Aorta (tissue), 5 donors: ENCODE measurements at regions of chr4 and their contacts with region 1.

Region 1: GRCh38 chr4:137531986-137532868 is at the start of gene PCDH18:
- DNase-seq: peak; percentile 94
- ATAC-seq: peak; percentile 93
- H3K4me3 ChIP-seq: peak within 1 kb of the TSS; percentile 73 to 88
- H3K27ac ChIP-seq: peak within 1 kb of the TSS in 1 of 2 donors; percentile 91
- H3K4me1 ChIP-seq: peaks cover 2 to 11% of the 10 kb centered on the region in 2 donors
- H3K27me3 ChIP-seq: no peaks in the 10 kb centered on the region
- total RNA-seq, gene PCDH18: 17.2 to 36.9 TPM

Region 2: GRCh38 chr4:137124278-137124932 is 407.8 kb before region 1 on chr4:
- intact Hi-C with region 1: loop called (anchors 5 to 10 kb)
- DNase-seq: no peak
- ATAC-seq: peak; percentile 89
- H3K4me3 ChIP-seq: peak overlapping the region; percentile 72 to 97
- H3K27ac ChIP-seq: no peak overlapping the region
- H3K4me1 ChIP-seq: no peaks in the 10 kb centered on the region
- H3K27me3 ChIP-seq: no peaks in the 10 kb centered on the region

Region 3: DNA sequence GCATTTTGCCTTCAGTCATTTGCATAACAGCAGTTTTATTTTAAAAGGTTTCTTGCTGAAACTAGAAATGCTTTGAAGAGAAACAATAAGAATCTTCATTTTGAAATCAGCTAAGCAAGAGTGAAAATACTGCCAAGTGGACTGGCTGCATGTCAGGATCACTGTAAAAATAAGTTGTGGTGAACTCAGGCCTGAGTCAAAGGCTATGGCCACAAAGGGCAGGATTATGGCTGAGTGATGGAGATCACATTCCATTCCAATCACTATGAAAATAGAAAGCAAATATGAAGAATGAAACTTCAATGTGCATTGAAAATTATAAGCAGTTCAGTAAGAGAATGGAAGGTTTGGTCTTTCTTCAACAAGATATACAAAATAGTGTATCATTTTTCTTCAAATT is 224.4 kb before region 1 on chr4:
- intact Hi-C with region 1: loop called in 1 of 2 experiments (anchors 2 kb)
- DNase-seq: peak in 1 of 2 donors; percentile 47
- ATAC-seq: no peak
- H3K4me3 ChIP-seq: no peak overlapping the region
- H3K27ac ChIP-seq: no peak overlapping the region
- H3K4me1 ChIP-seq: no peaks in the 10 kb centered on the region
- H3K27me3 ChIP-seq: no peaks in the 10 kb centered on the region

Region 4: GRCh38 chr4:137378821-137379220 is 153.4 kb before region 1 on chr4:
- intact Hi-C with region 1: loop called (anchors 5 kb)
- DNase-seq: no peak
- ATAC-seq: no peak
- H3K4me3 ChIP-seq: no peak overlapping the region
- H3K27ac ChIP-seq: no peak overlapping the region
- H3K4me1 ChIP-seq: peaks cover 3 to 4% of the 10 kb centered on the region in 2 donors
- H3K27me3 ChIP-seq: no peaks in the 10 kb centered on the region

Region 5: GRCh38 chr4:137432446-137433311 is 99.5 kb before region 1 on chr4:
- intact Hi-C with region 1: loop called (anchors 5 kb)
- DNase-seq: no peak
- ATAC-seq: no peak
- H3K4me3 ChIP-seq: peak overlapping the region; percentile 9 to 54
- H3K27ac ChIP-seq: peak overlapping the region in 1 of 2 donors; percentile 77
- H3K4me1 ChIP-seq: peaks cover 0 to 3% of the 10 kb centered on the region in 2 donors
- H3K27me3 ChIP-seq: no peaks in the 10 kb centered on the region

Region 6: GRCh38 chr4:137647375-137647774 is 115.1 kb after region 1 on chr4:
- intact Hi-C with region 1: no loop called
- DNase-seq: no peak
- ATAC-seq: no peak
- H3K4me3 ChIP-seq: no peak overlapping the region
- H3K27ac ChIP-seq: no peak overlapping the region
- H3K4me1 ChIP-seq: no peaks in the 10 kb centered on the region
- H3K27me3 ChIP-seq: no peaks in the 10 kb centered on the region

Region 7: GRCh38 chr4:137694138-137694537 is 161.9 kb after region 1 on chr4:
- intact Hi-C with region 1: loop called in 1 of 2 experiments (anchors 10 kb)
- DNase-seq: peak; percentile 64 to 76
- ATAC-seq: peak; percentile 79
- H3K4me3 ChIP-seq: no peak overlapping the region
- H3K27ac ChIP-seq: no peak overlapping the region
- H3K4me1 ChIP-seq: no peaks in the 10 kb centered on the region
- H3K27me3 ChIP-seq: no peaks in the 10 kb centered on the region

Region 8: GRCh38 chr4:137861682-137862081 is 329.5 kb after region 1 on chr4:
- intact Hi-C with region 1: loop called in 1 of 2 experiments (anchors 10 kb)
- DNase-seq: no peak
- ATAC-seq: no peak
- H3K4me3 ChIP-seq: no peak overlapping the region
- H3K27ac ChIP-seq: no peak overlapping the region
- H3K4me1 ChIP-seq: no peaks in the 10 kb centered on the region
- H3K27me3 ChIP-seq: no peaks in the 10 kb centered on the region

Region 9: DNA sequence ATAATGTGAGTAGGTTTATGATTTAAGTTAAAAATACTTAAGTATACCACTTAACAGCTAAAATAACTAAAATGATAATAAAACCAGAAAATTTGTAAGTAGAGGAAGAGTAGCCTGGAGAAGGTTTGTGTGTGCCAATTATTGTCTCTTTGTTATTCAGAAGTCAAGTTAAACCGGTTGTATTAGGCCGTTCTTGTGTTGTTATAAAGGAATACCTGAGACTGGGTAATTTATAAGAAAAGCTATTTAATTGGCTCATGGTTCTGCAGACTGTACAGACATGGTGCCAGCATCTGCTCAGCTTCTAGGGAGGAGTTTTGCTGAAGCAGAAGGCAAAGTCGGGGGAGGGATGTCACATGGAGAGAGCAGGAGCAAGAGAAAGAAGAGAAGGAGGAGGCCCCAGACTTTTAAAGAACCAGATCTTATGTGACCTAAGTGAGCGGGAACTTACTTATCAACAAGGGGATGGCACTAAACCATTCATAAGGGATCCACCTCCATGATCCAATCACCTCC is 349.4 kb after region 1 on chr4:
- intact Hi-C with region 1: no loop called
- DNase-seq: no peak
- ATAC-seq: no peak
- H3K4me3 ChIP-seq: no peak overlapping the region
- H3K27ac ChIP-seq: no peak overlapping the region
- H3K4me1 ChIP-seq: no peaks in the 10 kb centered on the region
- H3K27me3 ChIP-seq: no peaks in the 10 kb centered on the region